GM10248 (cell line): ENCODE measurements at regions of chr15 and their contacts with region 1.

Region 1: GRCh38 chr15:62389885-62390790 is 225.1 kb upstream of the C2CD4B start:
- DNase-seq: peak; percentile 91
- CTCF ChIP-seq: no peak

Region 2: DNA sequence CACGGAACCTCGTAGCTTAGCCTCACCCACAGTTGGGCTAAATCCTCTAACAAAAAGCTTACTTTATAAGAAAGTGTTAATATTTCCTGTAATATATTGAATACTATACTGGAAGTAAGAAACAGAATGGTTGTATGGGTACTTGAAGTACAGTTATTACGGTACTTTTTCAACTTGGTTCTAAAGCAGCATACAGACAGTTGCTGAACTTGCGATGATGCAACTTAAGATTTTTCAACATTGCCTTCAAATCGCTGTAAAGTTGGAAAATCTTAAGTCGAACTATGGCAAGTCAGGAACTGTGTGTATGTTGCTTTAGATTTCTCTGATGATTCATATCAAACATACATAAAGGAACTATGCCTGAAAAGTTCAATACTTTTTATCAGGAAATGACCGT is 20.7 kb before region 1 on chr15:
- CTCF ChIA-PET with region 1: interaction called, 10 read pairs
- POLR2A ChIA-PET with region 1: no interaction called
- DNase-seq: no peak
- CTCF ChIP-seq: no peak

Region 3: DNA sequence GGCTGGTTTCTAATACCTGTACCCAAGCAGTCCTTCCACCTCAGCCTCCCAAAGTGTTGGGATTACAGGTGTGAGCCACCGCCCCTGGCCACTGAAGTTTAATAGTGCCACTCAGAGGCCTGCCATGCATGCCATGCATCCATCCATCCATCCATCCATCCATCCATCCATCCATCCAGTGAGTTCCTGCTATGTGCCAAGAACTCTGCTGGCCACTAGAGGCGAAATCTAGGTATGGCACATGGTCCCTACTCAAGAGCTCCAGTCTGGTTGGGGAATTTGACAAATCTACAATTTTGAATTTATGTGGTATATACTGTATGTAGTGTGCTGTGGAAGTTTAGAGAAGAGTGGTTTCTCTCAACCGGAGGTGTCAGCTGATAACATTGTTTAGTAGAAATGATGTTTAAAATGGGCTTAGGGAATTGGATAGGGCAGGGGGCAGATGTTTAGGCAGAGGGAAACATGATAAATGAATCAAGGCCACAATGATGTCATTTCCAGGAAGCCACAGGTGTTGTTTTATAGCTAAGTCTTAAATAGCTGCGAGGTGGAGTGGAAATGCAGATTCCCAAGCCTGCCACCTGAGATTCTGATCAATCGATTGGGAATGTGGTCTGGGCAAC is 159.3 kb after region 1 on chr15:
- CTCF ChIA-PET with region 1: no interaction called
- POLR2A ChIA-PET with region 1: no interaction called
- DNase-seq: peak; percentile 26
- CTCF ChIP-seq: peak; percentile 50